ENCODE measurements at regions of chr4 and their contacts with region 1.

Region 1: GRCh38 chr4:99054428-99054994 is 34.1 kb downstream of the ADH5 start:
- DNase-seq: no peak
- H3K4me3 Mint-ChIP-seq: peak overlapping the region; percentile 27
- H3K27ac Mint-ChIP-seq: peak overlapping the region; percentile 79
- H3K4me1 Mint-ChIP-seq: peaks cover 34% of the 10 kb centered on the region
- H3K27me3 Mint-ChIP-seq: no peaks in the 10 kb centered on the region

Region 2: DNA sequence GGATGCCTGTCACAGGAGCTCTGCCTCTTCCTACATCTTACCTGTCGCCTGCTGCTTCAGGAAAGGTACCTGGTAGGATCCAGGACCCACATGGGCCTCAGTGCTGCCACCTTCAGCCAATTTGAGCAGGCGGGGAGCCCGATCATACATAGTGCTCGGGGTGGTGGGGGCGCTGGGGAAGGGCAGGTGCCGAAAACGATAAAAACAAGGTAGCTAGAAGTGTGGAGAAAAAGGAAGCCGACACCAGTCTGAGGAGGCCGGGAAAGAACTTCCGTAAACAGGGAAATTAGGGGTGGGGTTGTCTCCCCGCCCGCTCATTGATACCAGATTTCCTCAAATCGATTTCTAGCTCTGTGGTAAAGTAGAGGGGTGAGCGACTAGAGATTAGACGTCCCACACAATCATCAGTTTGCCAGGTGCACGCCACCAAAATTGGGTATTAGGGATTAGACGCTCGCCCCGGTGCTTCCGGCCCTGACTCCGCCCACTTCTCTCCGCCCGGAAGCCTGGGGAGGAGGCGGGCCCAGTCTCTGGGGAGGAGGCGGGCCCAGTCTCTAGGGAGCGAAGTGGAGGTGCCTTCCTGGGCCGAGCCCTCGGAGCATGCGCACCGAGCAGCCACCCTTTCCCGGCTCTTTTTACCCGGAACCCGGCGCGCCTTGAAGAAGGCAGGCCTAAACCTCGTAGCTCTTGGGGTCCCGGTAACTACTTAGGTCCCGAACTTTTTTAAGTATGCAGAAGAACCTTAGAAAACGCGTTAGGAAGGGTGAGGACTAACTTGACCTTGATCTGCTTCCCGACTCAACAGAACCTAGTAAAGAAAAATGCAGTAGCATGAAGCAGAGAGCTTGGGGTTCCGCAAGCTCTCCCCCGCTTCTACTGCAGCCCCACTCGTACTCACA is 911.3 kb before region 1 on chr4 and contains the start of gene STPG2:
- intact Hi-C with region 1: loop called (anchors 5 kb)
- DNase-seq: peak; percentile 98
- H3K4me3 Mint-ChIP-seq: peak within 1 kb of the TSS; percentile 95
- H3K27ac Mint-ChIP-seq: peak within 1 kb of the TSS; percentile 96
- H3K4me1 Mint-ChIP-seq: peaks cover 11% of the 10 kb centered on the region
- H3K27me3 Mint-ChIP-seq: peaks cover 14% of the 10 kb centered on the region
- total RNA-seq, gene STPG2: not detected in 2 replicates

Region 3: GRCh38 chr4:98260579-98261290 is 793.8 kb before region 1 on chr4:
- intact Hi-C with region 1: loop called (anchors 10 kb)
- DNase-seq: peak; percentile 97
- H3K4me3 Mint-ChIP-seq: peak overlapping the region; percentile 95
- H3K27ac Mint-ChIP-seq: peak overlapping the region; percentile 96
- H3K4me1 Mint-ChIP-seq: peaks cover 35% of the 10 kb centered on the region
- H3K27me3 Mint-ChIP-seq: peaks cover 4% of the 10 kb centered on the region

Region 4: DNA sequence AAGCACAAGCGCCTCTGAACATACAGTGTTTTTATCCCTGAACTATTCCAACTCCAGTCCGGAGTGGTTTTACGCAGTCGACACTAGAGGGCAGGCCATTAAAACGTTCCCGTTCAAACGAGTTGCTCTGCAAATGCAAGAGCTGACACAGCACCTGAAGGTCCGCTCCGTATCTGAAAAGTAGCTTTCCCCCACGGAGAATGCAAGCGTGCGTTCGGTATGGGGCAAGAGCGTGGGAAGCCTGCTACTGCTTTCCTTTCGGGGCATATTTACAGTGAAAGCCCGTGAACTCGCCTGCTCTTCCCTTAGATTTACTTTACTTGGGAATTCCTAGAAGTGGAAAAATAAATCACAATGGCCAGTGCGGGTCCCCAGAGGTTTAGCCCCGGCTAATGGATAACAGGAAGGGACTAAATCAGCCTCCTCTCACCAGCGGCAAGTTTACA is 586.9 kb before region 1 on chr4:
- intact Hi-C with region 1: loop called (anchors 2 kb)
- DNase-seq: peak; percentile 92
- H3K4me3 Mint-ChIP-seq: peak overlapping the region; percentile 79
- H3K27ac Mint-ChIP-seq: peak overlapping the region; percentile 38
- H3K4me1 Mint-ChIP-seq: peaks cover 33% of the 10 kb centered on the region
- H3K27me3 Mint-ChIP-seq: no peaks in the 10 kb centered on the region

Region 5: DNA sequence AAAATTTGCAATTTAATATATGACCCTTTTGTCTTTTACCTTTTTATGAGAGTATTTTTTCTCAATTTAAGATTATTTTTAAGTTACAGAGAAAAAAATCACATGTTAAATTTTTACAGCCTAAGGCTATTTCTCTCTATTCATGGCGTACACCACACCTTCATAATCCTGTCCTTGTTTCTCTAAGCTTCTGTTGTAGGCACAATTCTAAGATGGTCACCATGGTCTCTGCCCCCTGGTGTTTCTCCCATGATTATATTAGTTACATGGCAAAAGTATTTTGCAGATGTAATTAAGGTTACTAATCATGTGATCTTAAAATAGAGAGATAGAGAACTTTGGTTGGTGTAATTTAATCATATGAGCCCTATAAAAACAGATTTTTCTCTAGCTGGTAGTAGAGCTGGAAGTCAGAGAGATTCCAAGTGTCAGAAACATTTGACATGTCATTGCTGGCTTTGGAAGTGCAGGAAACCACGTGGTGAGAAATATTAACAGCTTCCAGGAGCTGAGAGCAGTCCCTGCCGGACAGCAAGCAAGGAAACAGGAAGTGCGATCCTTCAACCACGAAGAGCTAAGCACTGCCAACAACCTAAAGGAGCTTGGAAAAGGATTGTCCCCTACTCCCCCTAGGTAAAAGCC is 215.4 kb before region 1 on chr4:
- intact Hi-C with region 1: no loop called
- DNase-seq: no peak
- H3K4me3 Mint-ChIP-seq: no peak overlapping the region
- H3K27ac Mint-ChIP-seq: no peak overlapping the region
- H3K4me1 Mint-ChIP-seq: no peaks in the 10 kb centered on the region
- H3K27me3 Mint-ChIP-seq: no peaks in the 10 kb centered on the region

Region 6: GRCh38 chr4:99088481-99089365 is 34.2 kb after region 1 on chr4 and contains the start of gene ADH5:
- intact Hi-C with region 1: loop called (anchors 2 kb)
- DNase-seq: peak; percentile 95
- H3K4me3 Mint-ChIP-seq: peak within 1 kb of the TSS; percentile 90
- H3K27ac Mint-ChIP-seq: peak within 1 kb of the TSS; percentile 96
- H3K4me1 Mint-ChIP-seq: peaks cover 35% of the 10 kb centered on the region
- H3K27me3 Mint-ChIP-seq: peaks cover 1% of the 10 kb centered on the region
- total RNA-seq, gene ADH5: 82.6 and 85.3 TPM in 2 replicates